ENCODE measurements at regions of chr3 and their contacts with region 1.

Region 1: DNA sequence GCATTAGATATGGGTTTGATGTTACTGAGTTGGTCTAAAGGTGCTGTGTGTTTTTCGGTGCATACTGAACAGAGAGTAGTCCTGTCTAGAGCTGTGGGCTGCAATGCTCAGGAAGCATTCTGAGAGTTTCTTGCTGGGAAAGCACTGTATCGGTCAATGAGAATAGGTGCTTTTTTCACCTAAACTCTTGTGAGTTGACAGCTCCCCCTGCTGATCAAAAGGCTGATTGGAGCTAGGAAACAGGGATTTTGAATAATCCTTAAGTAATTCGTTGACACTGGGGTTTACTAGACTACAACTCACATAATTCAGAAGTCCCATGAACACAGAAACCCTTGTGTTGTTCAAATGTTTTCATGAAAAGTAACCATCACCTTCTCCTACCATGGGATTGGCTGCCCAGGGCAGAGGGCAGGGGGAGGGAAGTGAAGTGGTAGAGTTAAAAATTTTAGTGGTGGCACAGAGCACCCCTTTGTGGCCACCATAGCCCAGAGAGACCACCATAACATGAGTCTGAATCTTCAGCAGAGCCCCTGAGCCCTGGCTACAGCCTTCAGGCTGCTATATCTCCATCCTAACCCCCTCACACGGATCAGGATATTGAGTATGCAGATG is 13.0 kb upstream of the MANF start:
- DNase-seq: peak; percentile 56
- H3K4me3 ChIP-seq: no peak overlapping the region; a peak in 1 of 4 replicates
- H3K27ac ChIP-seq: no peak overlapping the region
- H3K4me1 ChIP-seq: no peaks in the 10 kb centered on the region
- H3K27me3 ChIP-seq: no peaks in the 10 kb centered on the region; the same call in 1 of the 2 replicates
- CTCF ChIP-seq: peak; percentile 90
- EP300 ChIP-seq: no peak
- RAD21 ChIP-seq: peak; percentile 85

Region 2: GRCh38 chr3:50971487-50971924 is 400.5 kb before region 1 on chr3:
- CTCF ChIA-PET with region 1: interaction called, 25 read pairs
- POLR2A ChIA-PET with region 1: no interaction called
- DNase-seq: peak; percentile 51
- H3K4me3 ChIP-seq: peak overlapping the region in 1 of 2 experiments; percentile 32; a peak in 1 of 4 replicates
- H3K27ac ChIP-seq: no peak overlapping the region
- H3K4me1 ChIP-seq: no peaks in the 10 kb centered on the region
- H3K27me3 ChIP-seq: no peaks in the 10 kb centered on the region
- CTCF ChIP-seq: peak; percentile 75
- EP300 ChIP-seq: no peak
- RAD21 ChIP-seq: peak; percentile 78

Region 3: DNA sequence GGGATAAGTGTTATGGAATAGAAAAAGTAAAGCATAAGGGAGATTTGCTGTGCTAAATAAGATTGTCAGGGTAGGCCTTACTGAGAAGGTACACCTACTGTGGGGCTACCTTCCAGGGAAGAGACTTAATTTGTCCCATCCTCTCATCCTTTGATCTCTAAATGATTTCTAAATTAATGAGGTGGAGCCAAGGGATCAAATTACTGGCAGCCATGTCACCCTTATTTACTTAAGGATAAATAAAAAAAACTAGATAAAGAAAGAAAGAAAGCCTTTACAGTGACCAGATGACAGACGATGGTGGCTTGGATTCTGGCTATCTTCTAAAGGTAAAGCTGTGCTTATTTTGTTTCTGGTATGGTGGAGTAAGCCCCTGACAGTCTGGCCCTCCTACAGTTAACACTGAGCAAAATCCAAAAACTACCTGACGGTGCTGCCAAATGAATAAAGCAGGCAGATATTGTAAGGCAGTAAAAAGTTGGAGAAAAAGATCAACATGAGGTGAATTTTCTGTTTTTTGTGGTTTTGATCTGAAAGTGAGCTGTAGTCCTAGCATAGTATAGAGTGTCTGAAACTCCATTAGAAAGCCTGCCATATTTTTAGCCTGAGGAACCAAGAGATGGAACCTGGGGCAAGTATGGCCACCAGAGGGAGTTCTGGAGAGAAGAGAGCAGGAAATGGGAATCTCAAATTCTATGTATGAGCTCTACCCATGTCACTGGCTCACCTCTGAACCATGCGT is 272.1 kb before region 1 on chr3:
- CTCF ChIA-PET with region 1: interaction called, 38 read pairs
- POLR2A ChIA-PET with region 1: no interaction called
- DNase-seq: peak; percentile 55
- H3K4me3 ChIP-seq: no peak overlapping the region; a peak in 1 of 4 replicates
- H3K27ac ChIP-seq: no peak overlapping the region
- H3K4me1 ChIP-seq: no peaks in the 10 kb centered on the region
- H3K27me3 ChIP-seq: no peaks in the 10 kb centered on the region
- CTCF ChIP-seq: peak; percentile 82
- EP300 ChIP-seq: no peak
- RAD21 ChIP-seq: peak; percentile 58

Measured in SK-N-SH (cell line).